ENCODE measurements at regions of chr12 and their contacts with region 1.

Region 1: GRCh38 chr12:54279866-54280467 is at the start of gene CBX5:
- DNase-seq: peak; percentile 97
- ATAC-seq: peak; percentile 40
- H3K4me3 Mint-ChIP-seq: no peak within 1 kb of the TSS
- H3K27ac Mint-ChIP-seq: no peak within 1 kb of the TSS
- H3K4me1 Mint-ChIP-seq: peaks cover 64% of the 10 kb centered on the region
- H3K27me3 Mint-ChIP-seq: no peaks in the 10 kb centered on the region
- CTCF ChIP-seq: no peak
- total RNA-seq, gene CBX5: 77.3 TPM in 2 replicates

Region 2: DNA sequence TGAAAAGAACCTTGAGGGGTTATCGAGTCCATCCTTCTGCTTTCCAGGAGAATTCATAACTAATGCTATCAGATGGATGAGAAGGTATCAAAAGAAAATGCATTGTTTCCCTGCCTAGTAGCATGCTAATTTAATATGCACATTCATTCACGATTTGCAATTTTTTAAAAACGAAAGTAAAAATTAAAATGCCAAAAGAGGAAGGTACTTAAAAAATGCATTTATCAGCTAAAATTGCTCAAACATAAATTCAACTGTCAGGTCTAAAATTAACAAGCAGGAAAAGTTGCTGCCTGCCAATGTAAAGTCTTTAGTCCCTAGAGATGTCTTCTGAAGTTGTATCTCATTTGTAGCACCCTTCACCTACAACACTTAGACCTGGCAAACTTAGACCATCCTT is 661.7 kb before region 1 on chr12:
- CTCF ChIA-PET with region 1: no interaction called
- POLR2A ChIA-PET with region 1: no interaction called
- intact Hi-C with region 1: no loop called
- DNase-seq: no peak
- ATAC-seq: no peak
- H3K4me3 Mint-ChIP-seq: peak overlapping the region; percentile 77
- H3K27ac Mint-ChIP-seq: peak overlapping the region; percentile 84
- H3K4me1 Mint-ChIP-seq: peaks cover 37% of the 10 kb centered on the region
- H3K27me3 Mint-ChIP-seq: no peaks in the 10 kb centered on the region
- CTCF ChIP-seq: no peak

Region 3: GRCh38 chr12:53727310-53728041 is 552.5 kb before region 1 on chr12 and contains the start of gene CALCOCO1:
- CTCF ChIA-PET with region 1: no interaction called
- POLR2A ChIA-PET with region 1: interaction called, 3 read pairs
- intact Hi-C with region 1: loop called (anchors 2 kb)
- DNase-seq: peak; percentile 90
- ATAC-seq: peak; percentile 97
- H3K4me3 Mint-ChIP-seq: peak within 1 kb of the TSS; percentile 97
- H3K27ac Mint-ChIP-seq: peak within 1 kb of the TSS; percentile 88
- H3K4me1 Mint-ChIP-seq: peaks cover 24% of the 10 kb centered on the region
- H3K27me3 Mint-ChIP-seq: no peaks in the 10 kb centered on the region
- CTCF ChIP-seq: no peak
- total RNA-seq, gene CALCOCO1: 44.2 and 59.5 TPM in 2 replicates

Region 4: DNA sequence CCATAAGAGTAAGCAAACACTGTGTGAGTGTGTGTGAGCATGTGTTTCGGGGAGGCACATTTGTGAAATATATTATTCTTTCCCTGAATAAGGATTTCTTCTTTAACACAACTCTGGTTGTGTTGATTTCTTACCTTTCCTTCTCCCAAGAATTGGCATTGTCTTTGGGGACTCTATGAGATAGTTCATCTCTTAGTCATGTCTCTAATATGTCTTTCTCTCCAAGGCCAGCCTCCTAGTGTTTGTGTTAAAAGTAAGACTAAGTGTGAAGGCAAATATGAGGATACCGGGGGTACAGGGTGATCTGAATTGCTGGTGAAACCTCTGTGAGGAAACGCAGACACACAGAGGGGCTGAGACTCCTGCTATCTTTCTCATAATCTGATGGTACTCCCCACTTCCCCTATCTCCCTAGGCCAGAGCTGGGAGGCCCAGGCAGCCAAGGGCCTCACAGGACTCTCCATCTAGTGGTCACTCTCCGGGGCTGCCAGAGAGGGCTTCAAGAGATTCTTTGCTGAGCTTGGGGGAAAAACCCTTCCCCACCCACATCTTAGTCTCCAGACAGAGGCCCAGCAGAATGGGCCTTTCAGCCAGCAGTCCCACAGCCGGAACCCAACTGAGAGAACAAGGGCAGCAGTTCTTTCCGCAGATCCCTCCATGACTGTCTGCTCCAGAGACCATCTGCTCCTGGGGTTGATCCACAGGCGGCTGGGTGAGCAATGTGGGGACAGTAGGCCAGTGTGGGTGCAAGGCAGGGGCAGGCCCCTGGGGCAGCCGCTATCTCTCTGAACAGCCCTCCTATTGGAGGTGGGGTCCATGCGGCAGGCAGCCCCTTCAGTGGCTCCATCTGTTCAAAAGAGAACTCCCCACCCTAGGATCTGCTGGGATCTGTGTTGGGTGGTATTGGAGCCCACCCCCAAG is 331.1 kb before region 1 on chr12:
- CTCF ChIA-PET with region 1: no interaction called
- POLR2A ChIA-PET with region 1: no interaction called
- intact Hi-C with region 1: no loop called
- DNase-seq: no peak
- ATAC-seq: no peak
- H3K4me3 Mint-ChIP-seq: no peak overlapping the region
- H3K27ac Mint-ChIP-seq: no peak overlapping the region
- H3K4me1 Mint-ChIP-seq: peaks cover 4% of the 10 kb centered on the region
- H3K27me3 Mint-ChIP-seq: peaks cover 77% of the 10 kb centered on the region
- CTCF ChIP-seq: no peak

Region 5: GRCh38 chr12:54229624-54230212 is 50.2 kb before region 1 on chr12:
- CTCF ChIA-PET with region 1: no interaction called
- POLR2A ChIA-PET with region 1: interaction called, 18 read pairs
- intact Hi-C with region 1: no loop called
- DNase-seq: no peak
- ATAC-seq: peak; percentile 86
- H3K4me3 Mint-ChIP-seq: peak overlapping the region; percentile 0
- H3K27ac Mint-ChIP-seq: peak overlapping the region; percentile 71
- H3K4me1 Mint-ChIP-seq: peaks cover 29% of the 10 kb centered on the region
- H3K27me3 Mint-ChIP-seq: no peaks in the 10 kb centered on the region
- CTCF ChIP-seq: no peak

Region 6: GRCh38 chr12:54259194-54260011 is 20.6 kb before region 1 on chr12:
- CTCF ChIA-PET with region 1: interaction called, 3 read pairs
- POLR2A ChIA-PET with region 1: interaction called, 42 read pairs
- intact Hi-C with region 1: loop called (anchors 1 kb)
- DNase-seq: peak; percentile 50
- ATAC-seq: peak; percentile 88
- H3K4me3 Mint-ChIP-seq: peak overlapping the region; percentile 80
- H3K27ac Mint-ChIP-seq: peak overlapping the region; percentile 78
- H3K4me1 Mint-ChIP-seq: peaks cover 26% of the 10 kb centered on the region
- H3K27me3 Mint-ChIP-seq: no peaks in the 10 kb centered on the region
- CTCF ChIP-seq: no peak

Region 7: DNA sequence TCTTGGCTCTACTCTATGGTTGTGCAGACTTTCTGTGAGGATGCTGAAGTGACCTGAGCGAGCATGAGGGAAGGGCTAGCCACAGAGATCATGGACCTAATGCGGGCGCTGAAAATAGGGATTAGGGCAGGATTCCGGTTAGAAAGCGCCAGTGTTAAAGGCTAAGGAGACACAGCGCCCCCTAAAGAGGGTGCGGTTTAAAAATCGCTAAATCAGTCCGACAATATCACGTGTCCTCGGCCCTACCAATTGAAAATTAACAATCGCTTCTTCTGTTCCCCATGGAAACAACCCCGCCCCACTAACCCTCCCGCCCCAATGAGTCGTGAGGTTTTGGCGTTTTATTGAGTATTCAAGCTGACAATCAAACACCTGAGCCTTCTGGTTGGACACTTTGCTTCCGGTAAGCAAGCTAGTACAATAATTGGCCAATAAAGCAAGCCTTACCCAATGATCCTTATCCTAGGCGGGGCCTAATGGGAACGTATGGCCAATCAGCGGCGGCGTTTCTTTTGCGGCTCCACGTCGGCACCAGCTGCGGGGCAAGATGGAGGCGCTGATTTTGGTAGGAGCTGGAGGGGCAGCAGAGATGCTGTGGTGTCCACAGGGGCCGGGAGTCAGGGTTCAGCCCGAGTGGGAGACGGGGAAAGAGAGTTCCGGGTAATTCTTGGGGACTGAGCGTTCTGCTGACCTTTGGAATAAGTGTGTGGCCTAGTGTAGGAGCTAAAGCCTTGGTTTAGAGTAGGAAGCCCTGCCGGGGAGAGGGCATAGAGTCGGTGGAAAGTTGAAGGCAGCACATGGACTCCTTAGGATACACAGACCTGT is 44.9 kb after region 1 on chr12 and contains the start of gene COPZ1:
- CTCF ChIA-PET with region 1: interaction called, 6 read pairs
- POLR2A ChIA-PET with region 1: interaction called, 50 read pairs
- intact Hi-C with region 1: loop called (anchors 1 kb)
- DNase-seq: peak; percentile 77
- ATAC-seq: peak; percentile 95
- H3K4me3 Mint-ChIP-seq: peak within 1 kb of the TSS; percentile 97
- H3K27ac Mint-ChIP-seq: peak within 1 kb of the TSS; percentile 97
- H3K4me1 Mint-ChIP-seq: peaks cover 31% of the 10 kb centered on the region
- H3K27me3 Mint-ChIP-seq: no peaks in the 10 kb centered on the region
- CTCF ChIP-seq: no peak
- total RNA-seq, gene COPZ1: 120 and 124 TPM in 2 replicates

Measured in activated B cell treated with CpG ODN at 0.5 μM for 24 hours (primary cell).